BJ (cell line): ENCODE measurements at regions of chr6 and their contacts with region 1.

Region 1: DNA sequence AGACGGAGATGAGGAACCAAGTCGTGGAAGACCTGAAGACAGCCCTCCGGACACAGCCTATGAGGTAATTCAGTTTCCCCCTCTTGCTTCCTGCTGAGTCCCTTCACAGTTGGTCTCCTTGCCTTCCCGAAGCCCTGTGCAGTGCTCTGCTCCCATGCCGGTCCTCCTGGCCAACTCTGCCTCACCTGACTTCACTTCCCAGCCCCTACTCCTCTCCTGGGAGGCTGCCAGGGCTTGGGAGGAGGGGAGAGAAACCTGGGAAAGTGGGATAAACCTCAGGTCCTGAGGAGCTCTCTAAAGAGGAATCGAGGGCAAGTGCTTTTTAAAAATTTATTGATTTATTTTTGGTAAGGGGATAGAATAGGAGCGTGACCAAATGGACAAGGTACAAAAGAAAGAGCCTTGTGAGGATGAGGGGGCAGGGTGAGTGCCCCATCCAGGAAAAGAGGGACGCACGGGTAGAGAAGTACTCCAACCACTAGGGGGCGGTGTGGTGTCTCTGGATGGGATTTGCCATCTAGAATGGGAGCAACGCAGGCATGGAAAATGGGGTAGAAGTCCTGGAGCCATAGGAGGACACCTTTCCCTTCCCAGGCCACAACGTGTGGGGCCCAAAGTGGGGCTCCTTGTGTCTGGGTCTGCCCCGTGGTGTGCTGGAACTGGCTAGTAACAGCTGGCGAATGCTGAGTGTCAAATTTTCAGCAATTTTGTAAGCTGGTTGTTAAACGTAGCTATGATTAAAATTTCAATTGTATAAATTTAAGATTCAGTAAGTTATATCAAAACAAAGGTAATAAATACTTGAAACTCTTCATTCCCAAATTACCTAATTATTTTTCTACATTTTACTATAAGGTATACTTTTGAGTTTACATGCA is 69.0 kb downstream of the MOCS1 start:
- DNase-seq: no peak
- H3K4me3 ChIP-seq: no peak overlapping the region
- H3K27me3 ChIP-seq: no peaks in the 10 kb centered on the region
- CTCF ChIP-seq: peak; percentile 80

Region 2: DNA sequence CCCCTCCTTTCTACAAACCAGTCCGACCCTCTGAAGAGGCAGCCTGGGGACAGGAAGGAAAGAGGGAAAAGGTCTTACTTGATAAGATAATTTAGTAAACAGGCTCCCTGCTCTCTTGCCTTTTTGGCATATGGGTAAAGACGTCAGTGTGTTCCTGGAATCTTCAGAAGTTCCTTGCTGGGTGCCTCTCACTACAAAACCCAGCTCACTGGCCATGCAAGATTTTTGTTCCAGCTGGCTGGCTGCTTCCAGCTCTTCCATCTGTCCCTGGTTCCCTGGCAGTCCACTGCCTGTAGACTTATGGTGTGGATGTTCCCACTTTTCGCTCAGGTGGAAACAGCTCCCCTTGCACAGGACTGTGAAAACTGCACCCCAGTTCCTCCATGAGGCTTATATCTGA is 11.6 kb after region 1 on chr6:
- CTCF ChIA-PET with region 1: interaction called, 40 read pairs
- POLR2A ChIA-PET with region 1: no interaction called
- DNase-seq: no peak
- H3K4me3 ChIP-seq: no peak overlapping the region
- H3K27me3 ChIP-seq: no peaks in the 10 kb centered on the region
- CTCF ChIP-seq: no peak

Region 3: GRCh38 chr6:39882531-39882899 is 17.3 kb after region 1 on chr6:
- CTCF ChIA-PET with region 1: interaction called, 40 read pairs
- POLR2A ChIA-PET with region 1: no interaction called
- DNase-seq: peak; percentile 87
- H3K4me3 ChIP-seq: no peak overlapping the region
- H3K27me3 ChIP-seq: no peaks in the 10 kb centered on the region
- CTCF ChIP-seq: no peak

Region 4: DNA sequence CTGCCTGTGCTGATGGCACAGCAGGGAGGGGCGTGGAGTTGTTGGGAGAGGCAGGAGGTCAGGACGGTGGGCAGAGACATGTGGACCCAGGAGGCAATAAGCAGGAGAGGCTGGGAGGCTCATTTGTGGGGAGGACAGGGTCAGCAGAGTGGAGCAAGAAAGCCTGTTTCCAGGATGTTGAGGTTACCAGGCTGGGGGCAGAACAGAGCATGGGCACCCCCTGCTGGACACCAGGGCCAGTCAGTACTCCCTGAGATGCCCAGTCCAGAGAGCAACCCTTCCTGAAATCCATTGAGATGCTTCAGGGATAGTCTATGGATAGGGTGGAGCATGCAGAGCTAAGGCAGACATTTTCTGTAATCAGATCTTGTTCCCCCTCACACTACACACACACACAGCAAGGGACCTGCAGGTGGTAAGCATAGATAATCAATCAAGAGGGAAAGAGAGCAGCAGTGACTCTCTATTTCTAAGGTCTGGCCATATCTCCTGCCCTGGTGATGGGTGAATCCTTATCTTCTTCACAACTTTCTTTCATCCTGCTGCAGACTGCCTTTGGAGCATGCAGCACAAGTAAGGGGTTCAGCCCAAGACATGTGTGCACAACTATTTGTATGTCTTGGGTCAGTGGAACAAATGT is 27.4 kb after region 1 on chr6:
- CTCF ChIA-PET with region 1: interaction called, 12 read pairs
- POLR2A ChIA-PET with region 1: no interaction called
- DNase-seq: no peak
- H3K4me3 ChIP-seq: no peak overlapping the region
- H3K27me3 ChIP-seq: no peaks in the 10 kb centered on the region
- CTCF ChIP-seq: peak; percentile 82

Region 5: GRCh38 chr6:40097590-40097989 is 232.3 kb after region 1 on chr6:
- CTCF ChIA-PET with region 1: no interaction called
- POLR2A ChIA-PET with region 1: no interaction called
- DNase-seq: no peak
- H3K4me3 ChIP-seq: no peak overlapping the region
- H3K27me3 ChIP-seq: no peaks in the 10 kb centered on the region
- CTCF ChIP-seq: no peak